Activated T-helper 1 cell treated with anti-CD3 and anti-CD28 coated beads, Interleukin-12 subunit alpha, Interleukin-12 subunit beta, Interleukin-2, Interleukin-4 antibody, amounts not matched to agents 30 ng/mL and 10 ng/mL and 1 ng/mL, durations not matched to agents 14 hours and 24 hours and 36 hours (primary cell): ENCODE measurements at regions of chr3 and their contacts with region 1.

Region 1: DNA sequence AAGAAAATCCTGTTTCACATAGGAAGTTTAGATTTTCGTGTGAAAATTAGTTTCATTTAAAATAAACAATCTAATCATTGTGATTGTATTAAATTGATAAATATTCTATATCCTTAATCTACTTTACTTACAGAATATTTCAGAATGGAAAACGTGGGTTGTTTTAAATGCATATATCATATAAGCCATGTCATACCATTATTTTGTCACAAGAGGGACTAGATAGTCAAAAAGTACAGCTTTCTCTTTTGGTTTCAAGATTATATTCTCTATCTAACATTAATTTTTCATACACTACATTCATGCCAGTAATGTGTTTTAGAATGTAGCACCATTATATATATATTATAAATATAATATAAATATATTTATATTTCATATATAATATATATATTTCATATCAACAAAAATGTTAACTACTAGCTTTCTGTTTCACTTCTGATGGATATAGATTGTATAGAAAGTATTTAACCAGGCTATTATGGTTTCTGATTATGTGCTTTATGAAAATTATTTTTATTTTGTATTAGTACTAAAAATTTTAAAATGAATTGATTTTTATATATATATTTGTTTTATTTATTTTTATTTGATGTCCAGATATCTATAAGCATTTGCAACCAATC is 45.3 kb downstream of the OSTN start:
- DNase-seq: no peak
- H3K4me3 Mint-ChIP-seq: no peak overlapping the region
- H3K27ac Mint-ChIP-seq: no peak overlapping the region
- H3K4me1 Mint-ChIP-seq: no peaks in the 10 kb centered on the region
- H3K27me3 Mint-ChIP-seq: peaks cover 4% of the 10 kb centered on the region

Region 2: GRCh38 chr3:191198932-191199331 is 45.4 kb before region 1 on chr3 and contains the start of gene OSTN:
- intact Hi-C with region 1: loop called (anchors 1 kb)
- DNase-seq: no peak
- H3K4me3 Mint-ChIP-seq: no peak within 1 kb of the TSS
- H3K27ac Mint-ChIP-seq: no peak within 1 kb of the TSS
- H3K4me1 Mint-ChIP-seq: no peaks in the 10 kb centered on the region
- H3K27me3 Mint-ChIP-seq: no peaks in the 10 kb centered on the region
- total RNA-seq, gene OSTN: not detected in 2 replicates

Region 3: GRCh38 chr3:191328962-191329653 is 84.8 kb after region 1 on chr3 and contains the start of gene CCDC50:
- intact Hi-C with region 1: loop called (anchors 2 kb)
- DNase-seq: peak; percentile 48
- H3K4me3 Mint-ChIP-seq: peak within 1 kb of the TSS; percentile 85
- H3K27ac Mint-ChIP-seq: peak within 1 kb of the TSS; percentile 92
- H3K4me1 Mint-ChIP-seq: peaks cover 32% of the 10 kb centered on the region
- H3K27me3 Mint-ChIP-seq: peaks cover 13% of the 10 kb centered on the region
- total RNA-seq, gene CCDC50: 36.1 and 37.2 TPM in 2 replicates

Region 4: GRCh38 chr3:191388823-191389222 is 144.5 kb after region 1 on chr3:
- intact Hi-C with region 1: loop called (anchors 5 kb)
- DNase-seq: no peak
- H3K4me3 Mint-ChIP-seq: no peak overlapping the region
- H3K27ac Mint-ChIP-seq: no peak overlapping the region
- H3K4me1 Mint-ChIP-seq: no peaks in the 10 kb centered on the region
- H3K27me3 Mint-ChIP-seq: no peaks in the 10 kb centered on the region